ENCODE measurements at regions of chr10 and their contacts with region 1.

Region 1: GRCh38 chr10:30534465-30535144 is 94.9 kb downstream of the LYZL2 start:
- DNase-seq: peak; percentile 79
- H3K4me3 ChIP-seq: no peak overlapping the region
- H3K27ac ChIP-seq: no peak overlapping the region
- H3K4me1 ChIP-seq: no peaks in the 10 kb centered on the region
- H3K27me3 ChIP-seq: no peaks in the 10 kb centered on the region
- CTCF ChIP-seq: peak; percentile 82

Region 2: GRCh38 chr10:30392564-30392990 is 142.0 kb before region 1 on chr10:
- intact Hi-C with region 1: loop called (anchors 2 kb)
- DNase-seq: peak; percentile 80
- H3K4me3 ChIP-seq: no peak overlapping the region
- H3K27ac ChIP-seq: no peak overlapping the region
- H3K4me1 ChIP-seq: no peaks in the 10 kb centered on the region
- H3K27me3 ChIP-seq: no peaks in the 10 kb centered on the region
- CTCF ChIP-seq: peak; percentile 95

Region 3: GRCh38 chr10:30413996-30414576 is 120.5 kb before region 1 on chr10:
- intact Hi-C with region 1: loop called (anchors 2 kb)
- DNase-seq: peak; percentile 56
- H3K4me3 ChIP-seq: no peak overlapping the region
- H3K27ac ChIP-seq: no peak overlapping the region
- H3K4me1 ChIP-seq: no peaks in the 10 kb centered on the region
- H3K27me3 ChIP-seq: no peaks in the 10 kb centered on the region
- CTCF ChIP-seq: peak; percentile 72

Region 4: GRCh38 chr10:30519639-30520038 is 15.0 kb before region 1 on chr10:
- intact Hi-C with region 1: no loop called
- DNase-seq: no peak
- H3K4me3 ChIP-seq: no peak overlapping the region
- H3K27ac ChIP-seq: no peak overlapping the region
- H3K4me1 ChIP-seq: no peaks in the 10 kb centered on the region
- H3K27me3 ChIP-seq: no peaks in the 10 kb centered on the region
- CTCF ChIP-seq: no peak

Region 5: DNA sequence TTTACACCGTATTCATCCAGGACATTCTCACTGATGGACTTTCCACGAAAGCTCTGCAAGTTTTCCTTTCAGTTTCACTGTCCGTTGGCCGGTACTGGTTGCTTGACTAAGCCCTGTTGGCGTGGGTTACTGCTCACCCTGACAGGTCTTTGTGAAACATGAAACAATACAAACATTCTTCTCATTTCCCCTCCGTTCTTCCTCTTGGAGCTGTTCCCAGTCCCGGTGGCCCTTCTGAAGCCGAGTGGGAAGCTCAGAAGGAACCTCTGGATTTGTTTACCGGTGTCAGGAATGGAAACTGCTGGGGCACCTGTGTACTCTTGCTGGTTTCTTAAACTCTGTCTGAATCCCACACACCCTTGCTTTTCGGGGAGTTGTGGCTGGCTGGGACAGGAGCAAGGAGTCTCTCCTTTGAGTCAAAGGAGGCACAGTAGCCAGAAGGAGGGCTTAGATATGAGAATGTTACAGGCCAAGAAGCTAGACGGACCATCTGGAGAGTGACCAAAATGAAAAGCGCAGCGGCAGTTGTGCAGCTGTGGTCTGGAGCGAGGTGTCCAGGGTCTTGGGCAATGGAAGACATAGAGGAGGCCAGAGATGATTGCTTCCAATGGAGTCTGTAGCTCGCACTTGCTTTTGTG is 49.3 kb after region 1 on chr10:
- intact Hi-C with region 1: loop called (anchors 10 kb)
- DNase-seq: peak; percentile 86
- H3K4me3 ChIP-seq: peak overlapping the region; percentile 20
- H3K27ac ChIP-seq: peak overlapping the region; percentile 87
- H3K4me1 ChIP-seq: peaks cover 11% of the 10 kb centered on the region
- H3K27me3 ChIP-seq: no peaks in the 10 kb centered on the region
- CTCF ChIP-seq: no peak